ENCODE measurements at regions of chr1 and their contacts with region 1.

Region 1: DNA sequence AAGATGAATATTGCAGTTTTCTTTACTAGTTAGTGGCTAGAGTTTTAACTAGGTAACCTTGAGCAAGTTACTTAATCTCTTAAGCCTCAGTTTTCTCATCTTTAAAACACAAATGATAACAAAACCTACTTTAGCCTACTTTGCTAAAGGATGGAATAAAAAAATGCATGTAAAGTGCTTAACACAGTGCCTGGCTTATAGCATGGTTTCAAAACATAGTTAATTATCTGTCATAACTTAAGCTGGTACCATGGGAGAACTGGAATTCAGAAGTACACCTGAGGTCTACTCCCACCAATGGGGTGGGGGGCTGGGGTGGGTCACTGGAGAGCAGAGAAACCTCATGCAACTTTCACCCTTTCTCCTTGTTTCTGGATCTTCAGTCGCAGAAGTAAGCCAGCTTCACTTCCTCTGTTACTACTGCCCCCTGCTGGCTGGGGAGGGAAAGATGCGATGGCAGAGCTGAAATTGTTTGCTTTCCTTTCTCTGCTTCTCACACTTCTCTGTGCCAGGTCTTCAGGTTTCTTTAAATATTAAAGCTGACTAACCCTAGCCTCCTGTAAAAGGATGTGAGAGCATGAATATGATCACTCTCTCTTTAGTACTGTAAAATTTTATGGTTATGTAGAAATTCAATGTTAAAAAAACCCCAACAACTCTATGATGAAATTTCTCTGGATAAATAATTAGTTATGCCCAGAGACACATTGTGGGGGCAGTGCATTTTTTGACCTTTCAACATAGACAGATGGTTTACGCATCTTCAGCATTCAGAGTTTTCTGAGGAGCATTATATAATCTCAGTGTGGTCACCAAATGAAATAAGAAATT is 324.2 kb downstream of the HLX start:
- DNase-seq: peak; percentile 82
- H3K4me3 ChIP-seq: no peak overlapping the region
- H3K27ac ChIP-seq: no peak overlapping the region
- H3K4me1 ChIP-seq: no peaks in the 10 kb centered on the region
- H3K27me3 ChIP-seq: peaks cover 0 to 1% of the 10 kb centered on the region in 2 experiments
- CTCF ChIP-seq: peak; percentile 74 to 86
- POLR2A ChIP-seq: no peak

Region 2: DNA sequence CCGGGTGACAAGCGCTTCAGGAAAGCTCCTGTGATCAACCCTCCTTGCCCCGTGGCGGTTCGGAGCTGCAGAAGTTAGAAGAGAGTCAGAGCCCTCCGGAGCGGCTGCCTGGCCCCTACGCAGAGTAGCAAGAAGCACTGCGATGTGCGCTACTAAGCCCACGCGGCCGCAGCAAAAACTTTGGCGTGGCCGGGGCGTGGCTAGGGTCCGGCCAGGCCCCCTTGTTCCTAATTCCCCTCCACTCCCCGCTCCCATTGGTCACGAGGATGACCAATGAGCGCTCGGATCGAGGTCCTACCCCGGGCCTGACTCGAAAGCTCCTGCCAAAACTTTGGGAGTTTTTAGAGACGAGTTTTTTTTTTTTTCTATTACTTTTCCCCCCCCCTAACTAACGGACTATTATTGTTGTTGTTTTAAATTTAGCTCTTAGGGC is 324.3 kb before region 1 on chr1 and contains the start of gene HLX:
- CTCF ChIA-PET with region 1: interaction called, 111 read pairs
- POLR2A ChIA-PET with region 1: no interaction called
- dilution Hi-C with region 1: no loop called
- intact Hi-C with region 1: loop called (anchors 1 kb)
- DNase-seq: peak; percentile 89
- H3K4me3 ChIP-seq: peak within 1 kb of the TSS; percentile 80 to 87 (median 82)
- H3K27ac ChIP-seq: peak within 1 kb of the TSS; percentile 35
- H3K4me1 ChIP-seq: peaks cover 41% of the 10 kb centered on the region
- H3K27me3 ChIP-seq: peaks cover 6 to 15% of the 10 kb centered on the region in 2 experiments
- CTCF ChIP-seq: no peak
- POLR2A ChIP-seq: no peak
- total RNA-seq, gene HLX: 33.5 and 39.1 TPM in 2 replicates

Region 3: DNA sequence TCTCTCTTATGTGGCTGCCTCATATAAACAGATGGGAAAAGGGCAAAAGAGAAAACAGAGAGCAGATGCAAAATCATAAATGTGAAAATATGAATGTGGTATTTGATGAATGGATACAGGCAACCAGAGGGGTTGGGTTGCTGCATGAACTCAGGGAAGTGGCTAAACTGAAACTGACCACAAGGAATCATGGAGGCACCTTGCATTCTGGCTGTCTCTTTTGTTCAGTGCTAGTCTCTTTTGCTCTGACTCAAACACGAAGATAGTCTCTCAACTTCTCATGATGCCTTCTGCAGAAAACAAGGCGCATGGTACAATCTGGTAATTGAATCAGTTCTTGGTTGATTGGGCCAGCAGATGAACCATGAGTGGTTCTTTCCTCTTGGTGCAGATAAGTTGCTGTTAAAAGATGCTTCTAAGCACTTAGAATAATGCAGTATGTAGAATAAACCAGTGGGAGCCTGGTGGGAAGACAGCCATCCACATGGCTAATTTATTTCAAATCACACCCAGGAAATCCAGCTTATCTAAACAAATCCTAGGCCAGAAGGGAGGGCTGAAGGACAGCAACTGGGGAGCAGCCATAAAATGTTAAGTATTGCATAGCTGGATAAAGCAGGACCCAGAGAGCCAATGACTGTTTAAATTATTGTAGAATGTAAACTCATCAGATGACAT is 260.0 kb before region 1 on chr1:
- CTCF ChIA-PET with region 1: interaction called, 12 read pairs
- POLR2A ChIA-PET with region 1: no interaction called
- dilution Hi-C with region 1: no loop called
- intact Hi-C with region 1: no loop called
- DNase-seq: no peak
- H3K4me3 ChIP-seq: no peak overlapping the region
- H3K27ac ChIP-seq: no peak overlapping the region
- H3K4me1 ChIP-seq: no peaks in the 10 kb centered on the region
- H3K27me3 ChIP-seq: peaks cover 0 to 2% of the 10 kb centered on the region in 2 experiments
- CTCF ChIP-seq: no peak
- POLR2A ChIP-seq: no peak

Region 4: DNA sequence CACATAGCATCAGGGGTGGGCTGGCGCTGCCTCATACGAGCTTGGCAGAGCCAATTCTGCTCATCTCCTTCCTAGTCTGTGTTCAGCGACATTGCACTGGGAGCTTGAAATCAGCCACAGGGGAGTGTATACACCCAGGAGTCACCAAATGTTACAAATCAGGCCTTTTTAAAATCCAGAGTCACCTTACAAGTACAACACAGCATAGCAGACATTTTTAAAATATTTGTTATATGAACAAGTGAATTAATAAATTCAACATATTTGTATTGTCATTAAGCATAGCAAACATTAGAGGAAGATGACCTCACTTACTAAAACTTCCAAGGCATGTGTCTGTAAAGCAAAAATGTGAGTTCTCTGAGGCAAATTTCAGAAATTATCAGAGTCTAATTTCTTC is 114.2 kb before region 1 on chr1:
- CTCF ChIA-PET with region 1: interaction called, 7 read pairs
- POLR2A ChIA-PET with region 1: no interaction called
- dilution Hi-C with region 1: no loop called
- intact Hi-C with region 1: loop called (anchors 5 kb)
- DNase-seq: peak; percentile 19
- H3K4me3 ChIP-seq: no peak overlapping the region
- H3K27ac ChIP-seq: peak overlapping the region; percentile 15
- H3K4me1 ChIP-seq: peaks cover 11% of the 10 kb centered on the region
- H3K27me3 ChIP-seq: no peaks in the 10 kb centered on the region
- CTCF ChIP-seq: no peak
- POLR2A ChIP-seq: no peak

Region 5: GRCh38 chr1:221192055-221192454 is 11.4 kb before region 1 on chr1:
- CTCF ChIA-PET with region 1: interaction called, 13 read pairs
- POLR2A ChIA-PET with region 1: no interaction called
- dilution Hi-C with region 1: no loop called
- intact Hi-C with region 1: no loop called
- DNase-seq: no peak
- H3K4me3 ChIP-seq: no peak overlapping the region
- H3K27ac ChIP-seq: no peak overlapping the region
- H3K4me1 ChIP-seq: no peaks in the 10 kb centered on the region
- H3K27me3 ChIP-seq: no peaks in the 10 kb centered on the region
- CTCF ChIP-seq: no peak
- POLR2A ChIP-seq: no peak

Region 6: DNA sequence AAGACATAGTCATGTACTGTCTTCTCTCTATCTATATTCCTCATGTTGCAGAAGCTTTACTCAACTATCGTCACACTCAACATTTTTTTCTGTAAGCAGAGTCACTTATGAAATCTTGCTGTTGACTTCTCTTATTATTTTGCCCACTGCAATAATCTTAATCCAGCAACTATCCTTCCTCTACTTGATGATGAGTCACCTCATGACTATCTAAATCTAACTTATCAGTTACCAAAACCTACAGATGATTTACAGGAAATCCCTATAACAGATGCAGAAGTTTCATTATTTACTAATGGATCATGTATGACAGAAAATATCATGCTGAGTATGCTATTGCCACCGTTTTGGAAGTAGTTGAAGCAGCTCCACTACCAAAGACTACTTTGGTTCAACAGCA is 159.6 kb after region 1 on chr1:
- CTCF ChIA-PET with region 1: no interaction called
- POLR2A ChIA-PET with region 1: no interaction called
- dilution Hi-C with region 1: no loop called
- intact Hi-C with region 1: no loop called
- DNase-seq: no peak
- H3K4me3 ChIP-seq: no peak overlapping the region
- H3K27ac ChIP-seq: no peak overlapping the region
- H3K4me1 ChIP-seq: no peaks in the 10 kb centered on the region
- H3K27me3 ChIP-seq: peaks cover 0 to 3% of the 10 kb centered on the region in 2 experiments
- CTCF ChIP-seq: no peak
- POLR2A ChIP-seq: no peak

Region 7: DNA sequence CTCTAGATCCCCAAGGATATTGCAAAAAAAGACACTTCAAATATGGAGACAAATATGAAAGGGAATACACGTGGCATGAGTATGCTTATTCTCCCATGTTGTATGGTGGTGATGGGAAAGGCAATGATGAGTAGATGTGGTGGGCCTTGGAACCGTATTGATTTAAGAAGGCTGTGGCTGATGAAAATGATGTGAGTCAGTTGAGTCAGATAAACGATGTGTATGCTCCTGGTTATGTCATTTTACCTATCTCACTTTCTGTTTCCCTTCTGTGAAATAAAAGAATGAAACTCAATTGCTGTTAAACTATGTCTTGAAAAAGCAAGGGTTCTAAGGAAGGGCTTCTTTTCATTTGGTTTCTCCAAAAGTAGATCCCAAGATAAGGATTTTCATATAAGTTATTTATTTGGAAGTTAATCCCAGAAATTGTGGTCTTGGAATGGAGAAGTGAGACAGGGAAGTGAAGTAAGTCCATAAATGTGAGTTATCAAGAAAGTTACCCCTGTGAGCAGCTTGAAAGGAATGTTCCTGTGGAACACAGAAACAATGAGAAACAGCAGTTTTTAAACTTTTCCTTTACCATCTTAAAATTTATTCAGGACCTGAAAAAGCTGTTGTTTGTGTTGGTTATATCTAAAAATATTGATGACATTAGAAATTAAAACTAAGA is 246.5 kb after region 1 on chr1:
- CTCF ChIA-PET with region 1: no interaction called
- POLR2A ChIA-PET with region 1: no interaction called
- dilution Hi-C with region 1: no loop called
- intact Hi-C with region 1: no loop called
- DNase-seq: no peak
- H3K4me3 ChIP-seq: no peak overlapping the region
- H3K27ac ChIP-seq: no peak overlapping the region
- H3K4me1 ChIP-seq: no peaks in the 10 kb centered on the region
- H3K27me3 ChIP-seq: no peaks in the 10 kb centered on the region
- CTCF ChIP-seq: no peak
- POLR2A ChIP-seq: no peak

Region 8: GRCh38 chr1:222455188-222455879 is 1251.9 kb after region 1 on chr1:
- CTCF ChIA-PET with region 1: interaction called, 13 read pairs
- POLR2A ChIA-PET with region 1: no interaction called
- dilution Hi-C with region 1: no loop called
- intact Hi-C with region 1: loop called (anchors 10 kb)
- DNase-seq: peak; percentile 73
- H3K4me3 ChIP-seq: no peak overlapping the region
- H3K27ac ChIP-seq: no peak overlapping the region
- H3K4me1 ChIP-seq: no peaks in the 10 kb centered on the region
- H3K27me3 ChIP-seq: peaks cover 2 to 3% of the 10 kb centered on the region in 2 experiments
- CTCF ChIP-seq: peak; percentile 90 to 94
- POLR2A ChIP-seq: no peak

Measured in endothelial cell of umbilical vein (primary cell).